Activated T-helper 1 cell treated with anti-CD3 and anti-CD28 coated beads, Interleukin-12 subunit alpha, Interleukin-12 subunit beta, Interleukin-2, Interleukin-4 antibody, amounts not matched to agents 30 ng/mL and 10 ng/mL and 1 ng/mL, durations not matched to agents 14 hours and 24 hours and 36 hours (primary cell): ENCODE measurements at regions of chr7 and their contacts with region 1.

Region 1: GRCh38 chr7:44606450-44607254 is at the start of gene OGDH:
- DNase-seq: peak; percentile 98
- H3K4me3 Mint-ChIP-seq: peak within 1 kb of the TSS; percentile 98
- H3K27ac Mint-ChIP-seq: peak within 1 kb of the TSS; percentile 99
- H3K4me1 Mint-ChIP-seq: peaks cover 39% of the 10 kb centered on the region
- H3K27me3 Mint-ChIP-seq: peaks cover 10% of the 10 kb centered on the region
- total RNA-seq, gene OGDH: 101 and 105 TPM in 2 replicates

Region 2: GRCh38 chr7:44200647-44201461 is 405.8 kb before region 1 on chr7 and contains the start of gene YKT6:
- intact Hi-C with region 1: loop called (anchors 1 kb)
- DNase-seq: peak; percentile 94
- H3K4me3 Mint-ChIP-seq: peak within 1 kb of the TSS; percentile 88
- H3K27ac Mint-ChIP-seq: peak within 1 kb of the TSS; percentile 52
- H3K4me1 Mint-ChIP-seq: peaks cover 37% of the 10 kb centered on the region
- H3K27me3 Mint-ChIP-seq: no peaks in the 10 kb centered on the region
- total RNA-seq, gene YKT6: 91.8 and 92.1 TPM in 2 replicates

Region 3: DNA sequence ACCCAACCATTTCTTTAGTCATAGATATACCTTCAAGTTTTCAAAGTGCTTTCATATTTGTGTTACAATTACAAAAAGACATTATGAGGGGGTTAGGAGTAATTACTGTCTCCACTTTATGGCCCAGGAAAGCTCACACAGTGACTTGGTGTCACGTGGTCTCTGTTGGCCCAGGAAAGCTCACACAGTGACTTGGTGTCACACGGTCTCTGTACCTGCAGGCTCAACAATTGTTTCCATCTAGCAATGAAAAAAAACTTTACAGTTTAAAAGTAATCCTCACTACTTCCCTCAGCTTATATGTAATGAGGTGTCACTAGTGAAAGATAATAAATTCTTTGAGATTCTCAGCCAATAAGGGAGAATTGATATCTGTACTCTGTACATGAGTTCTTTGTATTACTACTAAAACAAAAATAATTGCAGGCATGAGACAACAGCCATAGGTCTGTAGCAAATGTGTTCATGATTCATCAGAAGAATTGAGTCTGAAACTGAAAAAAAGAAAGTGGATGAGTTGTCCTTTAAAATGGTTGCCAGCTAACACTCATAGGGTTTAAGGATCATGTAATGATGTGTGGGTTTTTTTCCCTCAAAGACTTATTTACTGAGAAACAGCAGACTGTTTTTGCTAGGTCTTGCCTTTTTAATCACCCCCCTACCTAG is 10.7 kb after region 1 on chr7:
- intact Hi-C with region 1: loop called (anchors 1 kb)
- DNase-seq: no peak
- H3K4me3 Mint-ChIP-seq: peak overlapping the region; percentile 72
- H3K27ac Mint-ChIP-seq: peak overlapping the region; percentile 95
- H3K4me1 Mint-ChIP-seq: peaks cover 73% of the 10 kb centered on the region
- H3K27me3 Mint-ChIP-seq: no peaks in the 10 kb centered on the region

Region 4: DNA sequence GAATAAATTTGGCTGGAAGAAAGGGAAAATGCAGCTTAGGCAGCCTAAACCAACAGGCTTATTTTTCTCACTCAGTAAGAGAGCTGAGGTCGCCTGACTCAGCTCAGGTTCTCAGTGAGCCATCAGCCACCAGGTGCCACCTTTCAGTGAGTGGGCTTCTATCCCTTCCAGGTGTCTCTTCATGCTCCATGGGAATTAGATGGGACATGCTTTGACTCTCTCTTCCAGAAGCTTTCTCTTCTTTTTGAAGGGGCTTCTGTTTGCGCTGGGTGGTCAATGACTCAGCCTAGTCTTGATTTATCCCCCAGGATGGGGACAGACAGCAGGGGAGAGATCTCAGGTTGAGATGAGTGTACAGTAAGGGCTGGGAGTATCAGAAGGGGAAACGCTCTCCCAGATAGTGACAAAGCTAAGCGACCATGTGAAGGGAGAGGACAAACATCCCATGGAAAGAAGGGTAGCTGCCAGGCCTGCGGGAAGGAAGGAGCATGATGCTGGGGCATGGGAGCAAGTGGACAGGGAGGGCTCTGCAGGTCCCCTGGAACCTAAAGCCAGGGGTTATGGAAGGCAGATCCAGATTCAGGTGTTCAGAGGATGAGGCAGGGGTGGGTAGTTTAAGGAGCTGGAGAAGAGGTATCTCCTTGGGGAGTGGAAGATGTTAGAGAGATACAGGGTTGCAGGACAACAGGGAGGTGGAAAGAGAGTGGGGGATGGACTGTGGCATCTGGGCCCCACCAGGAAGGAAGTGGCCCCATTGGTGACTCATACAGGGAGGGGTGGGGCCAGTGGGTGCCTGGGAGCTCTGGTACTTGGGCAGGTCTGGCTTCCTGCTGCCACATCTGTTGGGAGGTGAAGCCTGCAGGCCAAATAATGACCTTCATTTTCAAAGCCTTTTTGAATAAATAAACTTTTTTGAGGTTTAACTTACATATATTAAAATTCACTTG is 32.2 kb after region 1 on chr7:
- intact Hi-C with region 1: loop called (anchors 1 kb)
- DNase-seq: peak; percentile 84
- H3K4me3 Mint-ChIP-seq: peak overlapping the region; percentile 82
- H3K27ac Mint-ChIP-seq: peak overlapping the region; percentile 100
- H3K4me1 Mint-ChIP-seq: peaks cover 81% of the 10 kb centered on the region
- H3K27me3 Mint-ChIP-seq: no peaks in the 10 kb centered on the region

Region 5: GRCh38 chr7:44885394-44886317 is 279.0 kb after region 1 on chr7 and contains the start of gene PURB:
- intact Hi-C with region 1: loop called (anchors 1 kb)
- DNase-seq: peak; percentile 97
- H3K4me3 Mint-ChIP-seq: peak within 1 kb of the TSS; percentile 98
- H3K27ac Mint-ChIP-seq: peak within 1 kb of the TSS; percentile 100
- H3K4me1 Mint-ChIP-seq: peaks cover 67% of the 10 kb centered on the region
- H3K27me3 Mint-ChIP-seq: no peaks in the 10 kb centered on the region
- total RNA-seq, gene PURB: 42.1 and 42.6 TPM in 2 replicates

Region 6: DNA sequence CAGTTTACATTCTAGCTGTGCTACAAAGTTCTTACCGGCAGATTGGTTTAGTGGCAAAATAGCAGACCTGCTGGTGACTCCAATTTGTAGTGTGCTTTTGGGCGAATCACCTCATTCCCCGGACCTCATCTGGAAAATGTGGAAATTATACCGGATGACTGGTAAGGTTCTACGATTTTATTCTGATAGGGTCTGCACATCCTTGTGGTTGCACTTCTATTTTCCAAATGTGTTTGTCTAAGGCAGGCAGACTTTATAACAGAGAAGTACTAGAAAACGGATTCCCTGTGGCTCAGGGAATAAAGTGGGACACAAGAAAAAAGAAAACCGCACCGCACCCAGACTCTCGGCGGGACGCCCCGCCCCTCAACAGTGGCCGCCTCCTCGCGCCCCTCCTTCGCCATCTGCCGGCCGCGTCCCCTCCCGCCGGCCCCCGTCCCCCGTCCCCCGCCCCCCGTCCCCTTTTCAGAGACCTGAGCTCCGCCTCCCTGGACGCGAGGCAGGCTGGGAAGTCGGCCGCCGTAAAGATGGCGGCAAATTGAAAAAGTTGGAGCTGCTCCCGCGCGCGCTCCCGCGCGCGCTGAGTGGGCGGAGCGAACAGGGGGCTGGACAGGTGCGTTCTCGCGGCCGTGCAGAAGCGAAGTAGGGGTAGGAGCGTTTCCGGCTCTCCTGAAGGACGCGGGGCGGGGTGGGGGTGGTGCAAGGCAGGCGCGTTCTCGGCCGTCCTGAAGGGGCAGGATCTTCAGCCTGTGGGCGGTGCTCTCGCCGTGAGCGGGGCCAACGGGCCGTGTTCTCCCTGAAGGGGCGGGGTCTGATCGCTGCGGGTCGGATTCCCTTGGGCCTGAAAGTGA is 392.8 kb after region 1 on chr7:
- intact Hi-C with region 1: loop called (anchors 1 kb)
- DNase-seq: peak; percentile 99
- H3K4me3 Mint-ChIP-seq: peak overlapping the region; percentile 88
- H3K27ac Mint-ChIP-seq: peak overlapping the region; percentile 91
- H3K4me1 Mint-ChIP-seq: peaks cover 58% of the 10 kb centered on the region
- H3K27me3 Mint-ChIP-seq: no peaks in the 10 kb centered on the region